Posterior cingulate gyrus (tissue), 11 donors: ENCODE measurements at regions of chr4 and their contacts with region 1.

Region 1: DNA sequence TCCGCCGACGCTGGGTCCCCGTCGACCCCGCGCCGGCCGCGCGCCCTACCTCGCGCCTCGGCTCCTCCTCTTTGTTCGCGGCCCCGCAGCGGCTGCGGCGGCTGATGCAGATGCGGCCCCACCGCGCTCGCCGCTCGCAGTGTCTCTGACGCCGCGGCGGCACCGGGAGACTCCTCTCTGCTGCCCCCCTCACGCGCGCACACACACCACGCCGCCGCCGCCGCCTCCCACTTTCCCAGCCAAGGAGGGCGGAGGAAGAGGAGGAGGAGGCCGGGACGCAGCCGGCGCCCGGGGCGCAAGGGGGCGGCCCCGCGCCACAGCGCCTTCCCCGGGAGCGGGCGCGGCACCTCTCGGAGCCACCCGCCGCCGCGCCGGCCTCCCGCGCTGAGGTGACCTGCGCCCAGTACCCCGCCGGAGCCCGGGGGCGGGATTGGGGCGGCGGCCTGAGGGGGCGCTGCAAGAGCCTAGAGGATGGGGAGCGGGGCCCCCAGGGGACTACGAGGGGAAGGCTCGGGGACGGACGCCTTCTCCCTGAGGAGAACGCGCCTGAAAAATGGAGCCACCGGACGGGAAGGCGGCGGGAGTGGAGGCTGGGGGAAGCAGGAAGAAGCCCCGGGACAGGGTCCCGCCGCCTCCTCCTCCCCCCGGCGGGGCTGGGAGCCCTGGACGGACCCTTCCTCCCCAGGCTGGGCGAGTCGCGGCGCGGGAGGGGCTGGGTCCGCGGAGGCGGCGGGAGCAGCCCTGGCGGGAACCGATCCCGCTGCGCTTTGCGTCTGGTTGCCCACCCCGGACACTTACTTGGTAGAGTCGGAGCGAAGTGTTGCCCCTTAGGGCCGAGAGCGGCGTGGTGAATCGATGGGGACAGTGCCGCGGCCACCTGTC is at the start of gene SH3RF1:
- DNase-seq: peak; percentile 71 to 97 (median 82)

Region 2: GRCh38 chr4:169010125-169011023 is 260.7 kb before region 1 on chr4 and contains the start of gene CBR4:
- intact Hi-C with region 1: loop called (anchors 1 kb)
- DNase-seq: peak; percentile 96 to 100 (median 98)

Region 3: GRCh38 chr4:169115897-169116254 is 155.2 kb before region 1 on chr4:
- intact Hi-C with region 1: loop called (anchors 5 kb)
- DNase-seq: peak in 1 of 10 donors; percentile 50

Region 4: GRCh38 chr4:169335331-169335730 is 64.3 kb after region 1 on chr4:
- intact Hi-C with region 1: loop called (anchors 10 kb)
- DNase-seq: no peak

Region 5: GRCh38 chr4:169485791-169486742 is 215.0 kb after region 1 on chr4:
- intact Hi-C with region 1: loop called (anchors 2 kb)
- DNase-seq: peak in 4 of 10 donors; percentile 10 to 63 (median 28)